ENCODE measurements at regions of chr6 and their contacts with region 1.

Region 1: DNA sequence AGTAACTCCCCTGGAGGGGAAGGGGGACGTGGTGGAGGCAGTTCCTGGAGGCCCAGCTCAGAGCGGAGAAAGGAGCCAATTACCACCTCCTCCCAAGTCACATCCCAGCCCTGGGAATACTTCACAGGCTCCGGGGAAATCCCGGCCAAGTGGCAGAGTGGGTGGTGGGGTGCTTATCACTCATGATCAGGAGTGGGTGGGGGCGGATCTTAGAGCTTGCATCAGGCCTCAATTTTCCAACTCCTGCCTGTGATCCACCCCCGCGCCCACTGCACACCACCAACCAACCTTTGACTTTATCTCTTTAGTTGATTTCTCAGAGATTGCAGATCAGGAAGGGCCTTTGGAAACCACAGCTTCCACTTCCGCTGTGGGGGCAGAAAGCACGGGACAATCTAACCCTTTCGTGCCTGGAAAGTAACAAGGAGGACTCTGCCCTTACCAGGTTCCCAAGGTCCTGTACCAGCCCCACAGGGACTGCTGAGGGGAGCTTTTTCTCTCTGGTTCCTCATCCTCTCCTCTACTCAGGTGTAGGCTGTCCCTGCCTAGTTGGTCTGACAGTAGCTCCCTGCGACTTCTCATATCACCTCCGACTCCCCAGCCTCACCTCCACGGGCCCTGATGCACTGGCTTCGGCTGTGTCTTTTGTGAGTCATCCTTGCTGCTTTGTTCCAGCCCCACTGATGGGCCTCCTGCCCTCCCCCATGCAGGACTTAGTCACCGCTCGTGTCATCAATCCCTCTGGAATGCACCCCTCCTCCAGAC is 24.9 kb upstream of the IER3 start:
- DNase-seq: peak; percentile 69
- H3K4me3 Mint-ChIP-seq: peak overlapping the region; percentile 52
- H3K27ac Mint-ChIP-seq: peak overlapping the region; percentile 96
- H3K4me1 Mint-ChIP-seq: peaks cover 73% of the 10 kb centered on the region
- H3K27me3 Mint-ChIP-seq: no peaks in the 10 kb centered on the region

Region 2: DNA sequence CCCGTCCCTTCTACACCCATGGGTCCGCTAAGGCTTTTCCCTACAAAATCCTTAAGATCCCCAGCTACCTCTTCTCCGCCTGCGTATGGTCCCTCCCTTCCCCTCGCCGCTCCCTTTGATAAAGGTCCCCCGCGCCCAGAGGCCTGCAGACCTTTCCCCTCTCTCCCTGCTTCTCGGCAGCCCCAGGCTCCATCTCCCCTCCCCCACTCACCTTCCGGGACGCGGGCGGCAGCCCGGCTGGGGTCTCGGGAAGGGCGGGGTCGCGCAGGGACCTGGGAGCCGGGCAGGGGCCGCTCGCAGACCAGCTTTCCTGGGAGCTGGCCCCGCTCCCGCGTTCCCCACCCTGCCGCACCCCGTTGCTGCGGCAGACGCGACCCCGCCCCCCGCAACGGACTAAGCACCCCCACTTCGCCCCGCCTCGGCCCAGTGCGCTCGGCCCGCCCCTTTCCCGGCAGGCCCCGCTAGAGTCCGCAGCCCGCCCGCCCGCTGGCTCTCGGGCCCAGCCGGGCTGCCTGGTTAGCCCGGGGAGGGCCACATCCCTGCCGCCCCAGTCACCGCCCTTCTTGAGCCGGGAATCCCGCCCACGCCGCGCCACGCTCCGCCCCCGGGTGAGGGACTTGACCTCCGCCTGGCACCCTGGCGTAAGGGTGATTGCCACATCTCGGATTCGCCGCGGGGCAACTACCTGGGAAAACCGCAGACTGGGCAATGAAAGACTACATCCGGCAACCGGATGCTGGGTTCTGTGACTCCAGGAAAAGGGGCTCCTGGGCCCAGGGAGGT is 26.8 kb before region 1 on chr6 and contains the start of gene FLOT1:
- intact Hi-C with region 1: loop called (anchors 1 kb)
- DNase-seq: peak; percentile 92
- H3K4me3 Mint-ChIP-seq: peak within 1 kb of the TSS; percentile 100
- H3K27ac Mint-ChIP-seq: peak within 1 kb of the TSS; percentile 99
- H3K4me1 Mint-ChIP-seq: peaks cover 67% of the 10 kb centered on the region
- H3K27me3 Mint-ChIP-seq: peaks cover 4% of the 10 kb centered on the region
- total RNA-seq, gene FLOT1: 252 and 262 TPM in 2 replicates

Region 3: DNA sequence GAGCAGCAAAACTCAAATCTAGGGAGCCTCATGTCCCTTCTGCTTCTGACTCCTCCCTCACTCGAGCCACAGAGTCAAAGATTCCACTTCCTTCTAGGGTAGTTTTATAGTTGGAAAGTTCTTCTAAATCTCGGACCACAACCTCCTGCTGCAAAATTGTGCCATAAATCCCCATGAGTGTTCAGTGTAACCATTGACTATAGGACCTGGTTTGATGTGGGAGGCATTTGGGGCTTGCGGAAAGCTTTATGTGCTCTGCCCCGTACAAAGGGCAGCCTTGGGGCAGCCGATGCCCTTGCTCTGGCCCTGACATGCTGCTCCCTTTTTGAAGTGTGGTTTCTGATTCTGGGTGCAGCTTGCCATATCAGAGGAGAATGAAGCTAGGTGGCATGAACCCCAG is 18.7 kb after region 1 on chr6:
- intact Hi-C with region 1: loop called (anchors 1 kb)
- DNase-seq: peak; percentile 23
- H3K4me3 Mint-ChIP-seq: peak overlapping the region; percentile 68
- H3K27ac Mint-ChIP-seq: peak overlapping the region; percentile 96
- H3K4me1 Mint-ChIP-seq: peaks cover 60% of the 10 kb centered on the region
- H3K27me3 Mint-ChIP-seq: no peaks in the 10 kb centered on the region

Region 4: DNA sequence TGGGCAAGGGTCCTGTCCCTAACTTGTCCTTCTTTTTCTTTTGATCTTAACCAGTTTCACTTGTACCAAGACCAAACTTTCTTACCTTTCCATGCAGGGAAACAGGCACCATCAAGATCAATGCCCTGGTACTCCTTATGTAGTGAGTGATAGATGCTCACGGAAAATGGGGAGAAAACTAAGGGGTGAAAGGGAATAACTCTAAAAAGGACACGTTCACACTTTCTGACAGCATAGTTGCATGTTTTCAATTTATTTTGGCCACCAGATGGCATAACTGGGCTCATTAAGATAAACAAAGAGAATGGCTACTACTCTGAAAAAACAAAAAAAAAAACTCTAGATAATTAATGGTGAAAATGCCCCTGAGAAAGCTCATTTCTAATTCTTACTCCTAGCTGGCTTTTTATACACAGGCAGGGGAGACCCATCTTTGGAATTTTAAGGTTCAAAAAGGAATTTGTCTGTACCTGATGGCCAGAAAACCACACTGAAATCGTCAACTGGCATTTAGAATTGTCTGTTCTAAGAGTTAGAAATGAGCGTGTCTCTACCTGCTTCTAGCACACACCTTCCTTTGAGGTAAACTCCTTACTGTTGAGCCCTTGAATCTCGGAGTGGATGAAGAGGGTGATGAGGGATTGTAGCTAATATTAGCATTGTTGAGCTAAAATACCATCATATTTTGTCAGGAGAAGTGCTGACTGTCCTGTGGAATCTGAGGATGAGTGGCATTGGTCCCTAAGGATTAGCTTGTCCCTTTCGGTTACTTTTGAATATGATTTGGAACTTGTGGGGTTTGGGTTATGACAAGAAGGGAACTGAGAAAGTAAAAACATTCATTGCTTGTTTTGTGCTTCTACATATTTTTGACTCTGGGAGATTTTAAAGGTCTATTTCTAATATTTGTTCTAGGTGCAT is 52.9 kb after region 1 on chr6:
- intact Hi-C with region 1: loop called (anchors 1 kb)
- DNase-seq: no peak
- H3K4me3 Mint-ChIP-seq: no peak overlapping the region
- H3K27ac Mint-ChIP-seq: peak overlapping the region; percentile 29
- H3K4me1 Mint-ChIP-seq: peaks cover 71% of the 10 kb centered on the region
- H3K27me3 Mint-ChIP-seq: no peaks in the 10 kb centered on the region

Region 5: DNA sequence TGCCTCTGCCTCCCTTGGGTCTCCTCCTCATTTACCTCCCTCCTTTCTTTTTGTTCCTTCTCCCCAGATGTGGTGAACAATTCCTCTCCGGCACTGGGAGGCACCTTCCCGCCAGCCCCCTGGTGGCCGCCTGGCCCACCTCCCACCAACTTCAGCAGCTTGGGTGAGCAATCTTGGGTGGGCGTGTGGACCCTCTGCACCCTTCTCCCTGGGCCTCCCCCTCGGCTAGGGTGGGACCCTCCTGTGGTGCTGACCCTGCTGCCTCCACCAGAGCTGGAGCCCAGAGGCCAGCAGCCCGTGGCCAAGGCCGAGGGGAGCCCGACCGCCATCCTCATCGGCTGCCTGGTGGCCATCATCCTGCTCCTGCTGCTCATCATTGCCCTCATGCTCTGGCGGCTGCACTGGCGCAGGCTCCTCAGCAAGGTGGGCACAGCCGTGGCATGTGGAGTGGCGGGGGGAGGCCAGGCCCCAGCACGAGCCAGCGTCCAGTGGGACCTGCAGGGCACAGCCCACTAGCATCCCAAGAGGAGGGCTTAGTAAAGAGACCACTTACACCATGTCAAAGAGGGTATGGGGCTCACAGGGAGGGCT is 123.8 kb after region 1 on chr6:
- intact Hi-C with region 1: no loop called
- DNase-seq: no peak
- H3K4me3 Mint-ChIP-seq: no peak overlapping the region
- H3K27ac Mint-ChIP-seq: no peak overlapping the region
- H3K4me1 Mint-ChIP-seq: no peaks in the 10 kb centered on the region
- H3K27me3 Mint-ChIP-seq: no peaks in the 10 kb centered on the region

Measured in activated T-helper 1 cell treated with anti-CD3 and anti-CD28 coated beads, Interleukin-12 subunit alpha, Interleukin-12 subunit beta, Interleukin-2, Interleukin-4 antibody, amounts not matched to agents 30 ng/mL and 10 ng/mL and 1 ng/mL, durations not matched to agents 14 hours and 24 hours and 36 hours (primary cell).